Spleen (tissue), 13 donors: ENCODE measurements at regions of chr17 and their contacts with region 1.

Region 1: DNA sequence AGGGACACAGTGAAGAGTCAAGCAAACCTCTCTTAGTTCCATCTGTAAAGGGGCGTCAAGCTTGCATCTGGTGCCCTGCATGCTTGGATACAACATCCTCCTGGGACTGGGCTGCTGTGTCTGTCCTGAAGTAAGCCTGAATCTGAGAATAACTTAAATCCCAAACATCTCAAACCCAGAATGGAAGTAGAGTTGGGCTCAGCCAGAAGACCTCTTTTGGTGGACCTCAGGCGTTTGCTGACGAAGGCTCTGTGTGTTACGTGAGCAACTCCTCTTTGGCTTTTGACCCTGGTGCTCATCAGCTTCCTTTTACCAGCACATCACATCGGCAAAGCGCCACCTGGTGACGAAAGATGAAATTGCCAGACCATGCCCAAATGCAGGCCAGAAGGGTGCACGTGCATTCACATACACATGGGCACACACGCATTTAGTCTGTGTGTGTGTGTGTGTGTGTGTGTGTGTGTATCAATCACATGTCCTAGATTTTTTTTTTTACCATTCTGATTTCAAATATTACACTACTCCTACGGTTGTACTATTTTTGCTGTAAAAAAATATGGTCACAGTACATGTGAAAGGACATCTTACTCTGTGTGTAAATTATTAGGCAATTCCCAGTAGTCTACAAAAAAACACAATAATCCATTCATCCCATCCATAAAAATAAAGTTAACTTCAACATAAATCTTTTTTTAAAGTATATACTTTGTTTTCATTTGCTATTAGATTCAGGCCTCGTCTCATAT is 41.1 kb upstream of the FOXJ1 start:
- DNase-seq: peak; percentile 95
- H3K4me3 ChIP-seq: no peak overlapping the region
- H3K27ac ChIP-seq: peak overlapping the region in 5 of 8 donors; percentile 9 to 66 (median 59)
- H3K4me1 ChIP-seq: peaks cover 6 to 46% (median 19%) of the 10 kb centered on the region in 6 donors
- H3K27me3 ChIP-seq: no peaks in the 10 kb centered on the region
- CTCF ChIP-seq: peak; percentile 86 to 97 (median 94)
- POLR2A ChIP-seq: no peak

Region 2: GRCh38 chr17:76121932-76122430 is 60.2 kb before region 1 on chr17:
- intact Hi-C with region 1: loop called (anchors 5 kb)
- DNase-seq: peak; percentile 82
- H3K4me3 ChIP-seq: peak overlapping the region in 7 of 8 donors; percentile 18 to 68 (median 36)
- H3K27ac ChIP-seq: peak overlapping the region in 6 of 8 donors; percentile 36 to 69 (median 58)
- H3K4me1 ChIP-seq: peaks cover 5 to 25% (median 16%) of the 10 kb centered on the region in 6 donors
- H3K27me3 ChIP-seq: peaks cover 0 to 5% (median 0%) of the 10 kb centered on the region in 7 donors
- CTCF ChIP-seq: no peak
- POLR2A ChIP-seq: no peak

Region 3: DNA sequence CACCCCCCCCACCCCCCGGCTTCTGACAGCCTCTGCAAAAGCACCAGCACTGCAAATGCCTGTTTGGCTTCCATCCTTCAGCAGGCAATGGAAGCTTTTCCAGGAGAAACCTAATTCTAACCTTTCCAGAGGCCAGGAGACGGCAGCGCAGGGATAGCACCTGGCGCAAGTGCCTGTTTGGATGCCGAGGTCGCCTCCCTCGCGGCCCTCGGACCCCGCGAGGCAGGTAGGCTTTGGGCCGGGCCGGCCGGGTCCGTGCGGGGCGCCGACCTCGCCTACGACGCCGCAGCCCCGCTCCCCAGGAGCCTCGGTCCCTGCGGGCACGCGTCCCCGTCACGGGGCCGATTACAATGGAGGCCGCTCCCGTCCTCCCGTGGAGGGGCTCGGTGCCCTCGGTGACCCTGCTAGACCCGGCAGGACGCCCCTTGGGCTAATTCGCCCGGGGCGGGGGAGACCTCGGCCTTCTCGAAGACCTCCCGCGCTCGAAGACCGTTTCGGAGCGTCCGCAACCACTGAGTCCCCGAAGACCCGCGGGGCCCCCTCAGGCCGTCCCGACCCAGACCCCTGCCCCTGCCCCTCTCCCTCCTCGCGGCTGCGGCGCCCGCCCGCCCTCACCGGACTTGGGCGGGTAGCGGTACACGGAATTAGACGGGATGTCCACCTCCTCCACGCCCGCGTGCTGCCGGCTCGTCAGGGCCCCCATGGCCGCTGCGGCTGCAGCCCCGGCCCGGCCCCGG is 57.5 kb after region 1 on chr17:
- intact Hi-C with region 1: loop called (anchors 10 kb)
- DNase-seq: peak; percentile 83
- H3K4me3 ChIP-seq: peak overlapping the region; percentile 28 to 83 (median 44)
- H3K27ac ChIP-seq: peak overlapping the region in 7 of 8 donors; percentile 39 to 83 (median 63)
- H3K4me1 ChIP-seq: peaks cover 8 to 26% (median 17%) of the 10 kb centered on the region in 6 donors
- H3K27me3 ChIP-seq: peaks cover 0 to 64% (median 35%) of the 10 kb centered on the region in 7 donors
- CTCF ChIP-seq: no peak
- POLR2A ChIP-seq: no peak

Region 4: GRCh38 chr17:76250141-76250540 is 68.0 kb after region 1 on chr17:
- intact Hi-C with region 1: no loop called
- DNase-seq: no peak
- H3K4me3 ChIP-seq: no peak overlapping the region
- H3K27ac ChIP-seq: peak overlapping the region in 2 of 8 donors; percentile 92 to 94
- H3K4me1 ChIP-seq: peaks cover 19 to 64% (median 39%) of the 10 kb centered on the region in 6 donors
- H3K27me3 ChIP-seq: peaks cover 0 to 8% (median 0%) of the 10 kb centered on the region in 7 donors
- CTCF ChIP-seq: no peak
- POLR2A ChIP-seq: no peak